Heart right ventricle (tissue), 16 donors: ENCODE measurements at regions of chr17 and their contacts with region 1.

Region 1: GRCh38 chr17:50841949-50842354 is 6.6 kb downstream of the WFIKKN2 start:
- DNase-seq: peak; percentile 70 to 71
- ATAC-seq: peak in 7 of 8 donors; percentile 46 to 71 (median 59)
- H3K4me3 ChIP-seq: no peak overlapping the region
- H3K27ac ChIP-seq: no peak overlapping the region
- H3K4me1 ChIP-seq: peaks cover 0 to 35% (median 3%) of the 10 kb centered on the region in 9 donors
- H3K27me3 ChIP-seq: no peaks in the 10 kb centered on the region
- CTCF ChIP-seq: peak; percentile 50 to 86 (median 83)

Region 2: GRCh38 chr17:50686494-50687199 is 155.3 kb before region 1 on chr17:
- intact Hi-C with region 1: loop called in 1 of 10 experiments (anchors 10 kb)
- DNase-seq: peak in 1 of 2 donors; percentile 34
- ATAC-seq: peak; percentile 21 to 91 (median 77)
- H3K4me3 ChIP-seq: no peak overlapping the region
- H3K27ac ChIP-seq: peak overlapping the region in 7 of 10 donors; percentile 39 to 65 (median 56)
- H3K4me1 ChIP-seq: peaks cover 2 to 36% (median 13%) of the 10 kb centered on the region in 9 donors
- H3K27me3 ChIP-seq: no peaks in the 10 kb centered on the region
- CTCF ChIP-seq: no peak

Region 3: DNA sequence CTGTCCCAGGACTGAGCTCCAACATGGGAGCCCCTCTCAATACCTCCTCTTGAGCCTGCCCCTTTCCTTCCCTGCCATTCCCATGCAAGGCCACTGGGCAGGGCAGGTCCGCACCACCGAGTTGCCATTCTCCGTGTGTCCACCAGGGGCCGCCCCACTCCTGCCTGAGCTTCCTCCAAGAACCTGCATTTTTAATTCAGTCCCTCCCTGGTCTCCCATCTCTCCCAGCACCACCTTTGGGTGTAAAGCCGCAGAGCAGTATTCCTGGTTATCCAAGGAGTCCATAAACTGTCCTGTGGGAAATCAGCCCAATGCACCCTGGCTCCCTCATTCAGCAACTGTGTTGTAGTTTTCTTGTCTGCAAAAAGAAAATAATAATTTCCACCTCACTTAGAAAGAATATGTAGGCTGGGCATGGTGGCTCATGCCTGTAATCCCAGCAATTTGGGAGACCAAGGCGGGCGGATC is 58.7 kb before region 1 on chr17:
- intact Hi-C with region 1: loop called (anchors 1 to 2 kb)
- DNase-seq: peak; percentile 86
- ATAC-seq: peak; percentile 82 to 91 (median 84)
- H3K4me3 ChIP-seq: no peak overlapping the region
- H3K27ac ChIP-seq: no peak overlapping the region
- H3K4me1 ChIP-seq: peaks cover 0 to 25% (median 3%) of the 10 kb centered on the region in 9 donors
- H3K27me3 ChIP-seq: peaks cover 0 to 4% (median 0%) of the 10 kb centered on the region in 7 donors
- CTCF ChIP-seq: peak; percentile 94 to 98 (median 96)

Region 4: DNA sequence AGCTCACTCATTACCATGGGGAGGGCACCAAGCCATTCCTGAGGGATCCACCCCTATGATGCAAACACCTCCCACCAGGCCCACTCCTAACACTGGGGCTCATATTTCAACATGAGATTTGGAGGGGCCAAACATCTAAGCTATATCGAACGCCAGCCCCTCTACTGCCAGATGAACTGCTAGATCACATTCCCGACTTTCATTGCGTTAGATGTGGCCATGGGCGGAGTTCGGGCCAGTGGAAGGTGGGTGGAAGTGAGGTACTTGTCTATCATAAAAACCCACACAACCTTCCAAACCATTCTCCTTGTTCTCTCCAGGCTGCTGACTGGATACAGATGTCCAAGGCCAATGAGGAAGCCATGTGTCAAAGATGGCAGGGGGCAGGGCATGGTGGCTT is 47.6 kb before region 1 on chr17:
- intact Hi-C with region 1: no loop called
- DNase-seq: no peak
- ATAC-seq: no peak
- H3K4me3 ChIP-seq: no peak overlapping the region
- H3K27ac ChIP-seq: no peak overlapping the region
- H3K4me1 ChIP-seq: peaks cover 0 to 23% (median 4%) of the 10 kb centered on the region in 9 donors
- H3K27me3 ChIP-seq: no peaks in the 10 kb centered on the region
- CTCF ChIP-seq: no peak

Region 5: DNA sequence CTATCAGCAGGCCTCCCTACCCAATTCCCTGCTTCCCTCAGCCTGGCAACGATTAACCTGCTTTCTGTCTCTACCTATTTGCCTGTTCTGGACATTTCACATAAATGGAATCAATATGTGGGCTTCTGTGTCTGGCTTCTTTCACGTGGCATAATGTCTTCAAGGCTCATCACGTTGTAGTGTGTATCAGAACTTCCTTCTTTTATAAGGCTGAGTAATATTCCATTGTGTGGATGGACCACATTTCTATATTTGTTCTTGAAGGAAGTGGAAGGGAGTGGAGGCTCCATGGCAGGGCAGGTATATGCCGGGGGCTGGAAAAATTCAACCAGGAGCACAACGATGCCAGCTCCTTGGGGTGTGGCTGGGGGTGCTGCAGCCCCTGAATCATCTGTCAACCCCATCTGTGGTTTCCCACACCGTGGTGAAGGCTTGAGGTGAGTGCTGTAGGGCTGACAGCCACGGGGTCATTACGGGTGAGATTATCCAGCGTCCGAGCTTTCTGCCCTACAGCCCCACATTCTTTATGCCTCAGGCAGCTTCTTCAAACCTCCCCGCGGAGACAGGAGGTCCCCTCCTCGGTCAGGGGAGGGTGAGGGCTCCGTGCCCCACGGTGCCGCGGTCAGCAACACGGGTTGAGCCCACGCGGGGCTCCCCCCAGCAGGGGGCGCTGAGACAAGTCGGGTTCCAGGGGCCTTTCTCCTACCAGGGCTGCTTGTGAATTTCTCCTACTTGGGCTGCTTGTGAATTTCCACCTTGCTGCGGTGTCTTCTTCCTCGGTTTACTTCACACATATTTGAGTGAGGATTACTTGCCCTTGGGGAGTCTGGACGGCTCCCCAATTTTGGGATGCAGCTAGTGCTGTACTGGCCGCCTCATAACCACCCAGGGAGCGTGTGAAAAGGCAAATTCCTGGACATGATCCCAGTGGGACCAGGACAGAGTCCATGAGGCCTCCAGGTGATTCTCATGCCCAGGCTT is 24.9 kb before region 1 on chr17:
- intact Hi-C with region 1: loop called in 1 of 10 experiments (anchors 1 kb)
- DNase-seq: peak; percentile 29 to 66
- ATAC-seq: peak; percentile 43 to 85 (median 75)
- H3K4me3 ChIP-seq: peak overlapping the region in 3 of 10 donors; percentile 12 to 24 (median 17)
- H3K27ac ChIP-seq: no peak overlapping the region
- H3K4me1 ChIP-seq: peaks cover 0 to 7% (median 0%) of the 10 kb centered on the region in 9 donors
- H3K27me3 ChIP-seq: peaks cover 0 to 7% (median 0%) of the 10 kb centered on the region in 7 donors
- CTCF ChIP-seq: peak; percentile 68 to 87 (median 81)

Region 6: DNA sequence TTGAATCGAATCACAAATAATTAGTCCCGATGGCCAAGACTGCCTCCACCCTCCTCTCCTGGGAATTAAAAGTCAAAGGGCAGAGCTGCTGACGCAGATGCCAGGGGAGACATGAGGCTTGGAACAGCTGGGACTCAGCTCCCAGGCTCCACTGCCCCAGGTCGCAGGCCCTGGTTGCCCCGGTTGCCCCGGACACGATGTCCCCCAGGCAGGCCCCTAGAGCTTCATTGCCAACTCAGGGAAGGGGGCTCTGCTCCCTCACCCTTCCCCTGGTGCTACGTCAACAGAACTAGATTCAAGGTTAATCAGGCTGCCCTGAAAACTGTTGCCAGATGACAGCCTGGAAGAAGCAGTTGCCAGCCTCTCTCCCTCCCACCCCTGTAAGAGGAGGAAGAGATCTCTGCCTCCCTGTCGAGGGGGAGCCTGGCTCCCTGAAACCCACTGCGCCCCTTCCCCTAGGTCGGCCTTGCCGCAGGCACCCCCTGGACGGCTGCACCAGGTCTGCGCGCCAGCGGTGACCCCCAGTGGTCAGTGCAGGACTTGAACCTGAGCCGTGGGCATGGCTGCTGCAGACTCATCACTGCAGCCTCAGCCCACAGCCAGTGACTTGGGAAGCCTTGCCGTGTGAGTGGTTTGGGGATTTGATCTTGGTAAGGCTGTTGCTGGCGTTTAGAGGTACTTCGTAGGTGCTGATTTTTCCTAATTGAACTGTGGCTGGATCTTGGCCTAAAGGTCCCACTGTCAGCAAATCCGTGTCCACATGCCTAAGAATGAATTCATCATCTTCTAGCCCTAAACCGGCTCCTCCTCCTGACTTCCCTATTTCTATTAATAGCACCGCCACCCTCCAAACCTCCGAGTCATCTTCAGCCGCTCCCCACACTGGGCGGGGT is 108.3 kb after region 1 on chr17:
- intact Hi-C with region 1: loop called in 1 of 10 experiments (anchors 5 kb)
- DNase-seq: peak; percentile 77 to 80
- ATAC-seq: peak; percentile 77 to 89 (median 85)
- H3K4me3 ChIP-seq: peak overlapping the region in 3 of 10 donors; percentile 0 to 5 (median 2)
- H3K27ac ChIP-seq: peak overlapping the region; percentile 44 to 88 (median 79)
- H3K4me1 ChIP-seq: peaks cover 22 to 64% (median 51%) of the 10 kb centered on the region in 9 donors
- H3K27me3 ChIP-seq: no peaks in the 10 kb centered on the region
- CTCF ChIP-seq: peak; percentile 75 to 93 (median 85)

Region 7: GRCh38 chr17:51056813-51057510 is 215.0 kb after region 1 on chr17:
- intact Hi-C with region 1: loop called in 1 of 10 experiments (anchors 5 kb)
- DNase-seq: peak in 1 of 2 donors; percentile 51
- ATAC-seq: peak; percentile 78 to 91 (median 82)
- H3K4me3 ChIP-seq: peak overlapping the region in 2 of 10 donors; percentile 1 to 9
- H3K27ac ChIP-seq: peak overlapping the region in 9 of 10 donors; percentile 49 to 76 (median 60)
- H3K4me1 ChIP-seq: peaks cover 0 to 29% (median 23%) of the 10 kb centered on the region in 9 donors
- H3K27me3 ChIP-seq: no peaks in the 10 kb centered on the region
- CTCF ChIP-seq: peak; percentile 22 to 74 (median 60)

Region 8: DNA sequence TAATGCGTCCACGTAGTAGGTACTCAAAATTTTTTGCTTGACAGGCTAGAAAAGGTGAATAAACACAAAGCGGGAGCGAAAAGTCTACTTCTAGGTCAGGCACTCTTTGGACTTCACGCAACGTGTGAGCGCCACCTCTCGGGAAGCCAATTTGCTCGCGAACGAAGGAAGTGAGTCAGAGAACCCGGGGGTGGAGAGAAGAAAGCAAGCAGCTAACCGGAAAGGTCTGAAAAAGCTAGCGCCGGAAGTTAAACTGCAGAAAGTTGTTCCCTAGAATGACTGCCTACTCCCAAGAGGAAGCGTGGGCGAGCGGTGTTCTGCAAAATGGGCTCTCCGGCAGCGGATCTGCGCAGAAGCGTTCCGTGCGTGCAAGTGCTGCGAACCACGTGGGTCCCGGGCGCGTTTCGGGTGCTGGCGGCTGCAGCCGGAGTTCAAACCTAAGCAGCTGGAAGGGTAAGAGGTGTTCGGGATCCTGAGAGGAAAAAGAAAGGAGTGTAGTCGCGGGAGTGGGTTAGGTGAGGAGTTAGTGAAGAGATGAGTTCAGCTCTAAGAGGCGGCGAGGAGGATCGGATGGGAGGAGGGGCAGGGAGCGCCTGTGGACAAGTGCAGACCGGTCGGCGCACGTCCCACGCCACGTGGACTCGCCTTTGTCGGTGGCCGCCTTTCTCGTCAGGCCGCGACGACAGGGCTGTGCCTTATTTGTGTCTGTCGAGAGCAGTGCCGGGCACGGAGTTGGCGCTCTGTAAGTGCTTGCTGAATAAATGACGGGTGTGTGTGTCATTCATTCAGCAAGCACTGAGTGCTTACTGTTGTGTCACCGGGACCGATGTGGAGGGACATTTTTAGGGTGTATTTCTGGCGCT is 311.5 kb after region 1 on chr17 and contains the start of gene NME1:
- intact Hi-C with region 1: loop called in 1 of 10 experiments (anchors 10 kb)
- DNase-seq: peak; percentile 92 to 98
- ATAC-seq: peak; percentile 96 to 99 (median 98)
- H3K4me3 ChIP-seq: peak within 1 kb of the TSS; percentile 51 to 90 (median 71)
- H3K27ac ChIP-seq: peak within 1 kb of the TSS; percentile 72 to 91 (median 82)
- H3K4me1 ChIP-seq: peaks cover 0 to 22% (median 12%) of the 10 kb centered on the region in 9 donors
- H3K27me3 ChIP-seq: no peaks in the 10 kb centered on the region
- CTCF ChIP-seq: peak; percentile 55 to 96 (median 76)
- total RNA-seq, gene NME1: 12.9 to 52.0 (median 21.8) TPM

Region 9: DNA sequence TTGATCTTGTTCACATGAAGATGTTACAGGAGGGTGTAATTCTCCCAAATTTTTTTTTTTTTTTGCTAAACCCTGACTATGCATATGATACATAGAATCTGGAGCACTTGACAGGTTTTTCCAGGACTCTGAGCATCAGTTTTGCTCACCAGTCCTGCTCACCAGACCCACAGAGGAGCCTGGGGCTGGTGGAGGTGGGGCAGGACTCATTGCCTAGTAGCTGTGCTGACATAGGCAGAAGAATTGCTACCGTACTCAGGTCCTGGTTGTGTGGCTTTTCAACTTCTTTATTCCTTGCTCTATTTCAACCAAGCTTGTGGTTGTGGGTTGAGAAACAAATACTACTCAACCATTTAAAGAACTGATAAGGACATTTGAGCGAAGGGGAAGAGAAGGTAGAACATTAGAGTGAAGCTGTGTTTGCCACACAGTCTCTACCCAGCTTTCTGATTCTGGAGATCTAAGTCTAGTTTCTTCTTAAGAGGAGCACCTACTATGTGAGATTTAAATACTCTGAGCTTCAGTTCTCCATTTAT is 630.8 kb after region 1 on chr17:
- intact Hi-C with region 1: no loop called
- DNase-seq: no peak
- ATAC-seq: no peak
- H3K4me3 ChIP-seq: no peak overlapping the region
- H3K27ac ChIP-seq: no peak overlapping the region
- H3K4me1 ChIP-seq: no peaks in the 10 kb centered on the region
- H3K27me3 ChIP-seq: peaks cover 0 to 46% (median 19%) of the 10 kb centered on the region in 7 donors
- CTCF ChIP-seq: no peak